Naive thymus-derived CD4-positive, alpha-beta T cell (primary cell): ENCODE measurements at regions of chr2 and their contacts with region 1.

Region 1: GRCh38 chr2:101697124-101698013 is at the start of gene MAP4K4:
- DNase-seq: peak; percentile 56 to 81 (median 70)
- ATAC-seq: peak; percentile 76
- H3K4me3 ChIP-seq: peak within 1 kb of the TSS; percentile 89
- H3K4me3 Mint-ChIP-seq: peak within 1 kb of the TSS in 6 of 10 donors; percentile 82 to 98 (median 96)
- H3K27ac ChIP-seq: peak within 1 kb of the TSS; percentile 79
- H3K27ac Mint-ChIP-seq: peak within 1 kb of the TSS; percentile 88 to 98 (median 93)
- H3K4me1 ChIP-seq: peaks cover 19 to 21% of the 10 kb centered on the region in 2 donors
- H3K4me1 Mint-ChIP-seq: peaks cover 11 to 41% (median 26%) of the 10 kb centered on the region in 7 donors
- H3K27me3 ChIP-seq: no peaks in the 10 kb centered on the region
- H3K27me3 Mint-ChIP-seq: no peaks in the 10 kb centered on the region
- total RNA-seq, gene MAP4K4: 104 to 138 (median 128) TPM

Region 2: GRCh38 chr2:101308432-101309210 is 388.7 kb before region 1 on chr2 and contains the start of gene RNF149:
- CTCF ChIA-PET with region 1: no interaction called
- POLR2A ChIA-PET with region 1: interaction called, 3 read pairs
- intact Hi-C with region 1: loop called (anchors 5 kb)
- DNase-seq: peak; percentile 80 to 98 (median 86)
- ATAC-seq: peak; percentile 84
- H3K4me3 ChIP-seq: peak within 1 kb of the TSS; percentile 84
- H3K4me3 Mint-ChIP-seq: peak within 1 kb of the TSS; percentile 91 to 100 (median 98)
- H3K27ac ChIP-seq: peak within 1 kb of the TSS; percentile 88
- H3K27ac Mint-ChIP-seq: peak within 1 kb of the TSS; percentile 91 to 99 (median 98)
- H3K4me1 ChIP-seq: peaks cover 60 to 63% of the 10 kb centered on the region in 2 donors
- H3K4me1 Mint-ChIP-seq: peaks cover 56 to 83% (median 74%) of the 10 kb centered on the region in 7 donors
- H3K27me3 ChIP-seq: no peaks in the 10 kb centered on the region
- H3K27me3 Mint-ChIP-seq: peaks cover 0 to 4% (median 0%) of the 10 kb centered on the region in 5 donors
- total RNA-seq, gene RNF149: 88.9 to 159 (median 114) TPM

Region 3: DNA sequence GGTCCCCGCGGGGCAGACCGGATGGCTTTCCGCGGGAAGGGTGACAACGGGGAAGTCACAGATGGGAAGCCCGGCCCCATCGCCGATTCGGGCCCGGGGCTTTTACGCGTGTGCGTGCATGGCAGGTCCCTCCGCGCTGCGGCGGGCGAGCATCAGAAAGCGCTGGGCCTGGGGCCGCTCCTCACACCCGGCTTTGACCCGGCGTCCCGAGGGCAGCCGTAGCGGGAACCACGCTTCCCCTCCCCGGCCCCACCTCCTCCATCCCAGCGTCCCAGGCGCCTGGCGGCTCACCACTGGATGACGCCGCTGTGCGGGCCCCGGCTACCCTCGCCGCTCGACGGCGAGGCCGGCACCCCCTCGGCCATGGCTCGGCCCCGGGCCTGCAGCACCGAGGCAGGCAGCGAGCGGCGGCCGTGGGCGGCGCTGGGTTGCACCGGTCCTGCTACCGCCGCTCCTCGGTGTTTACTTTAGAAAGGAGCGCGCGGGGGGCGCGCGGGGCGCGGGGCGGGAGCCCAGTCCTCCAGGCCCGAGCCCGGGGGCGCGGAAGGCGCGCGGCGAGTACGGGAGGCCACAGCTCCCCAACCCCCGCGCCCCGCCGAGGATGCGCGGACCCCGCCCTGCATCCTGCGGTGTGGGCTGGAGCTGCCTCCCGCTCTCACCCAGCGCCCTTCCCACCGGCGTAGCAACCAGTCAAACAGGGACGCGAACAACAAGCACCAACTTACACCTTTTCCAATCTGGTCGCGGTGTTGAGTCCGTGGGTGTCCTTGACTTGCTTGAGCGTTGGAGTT is 223.3 kb before region 1 on chr2:
- CTCF ChIA-PET with region 1: no interaction called
- POLR2A ChIA-PET with region 1: interaction called, 5 read pairs
- intact Hi-C with region 1: loop called (anchors 2 kb)
- DNase-seq: peak; percentile 7 to 70 (median 20)
- ATAC-seq: peak; percentile 46
- H3K4me3 ChIP-seq: peak overlapping the region; percentile 48
- H3K4me3 Mint-ChIP-seq: peak overlapping the region; percentile 81 to 90 (median 85)
- H3K27ac ChIP-seq: no peak overlapping the region
- H3K27ac Mint-ChIP-seq: peak overlapping the region in 5 of 9 donors; percentile 36 to 92 (median 73)
- H3K4me1 ChIP-seq: peaks cover 0 to 6% of the 10 kb centered on the region in 2 donors
- H3K4me1 Mint-ChIP-seq: peaks cover 6 to 50% (median 11%) of the 10 kb centered on the region in 7 donors
- H3K27me3 ChIP-seq: no peaks in the 10 kb centered on the region
- H3K27me3 Mint-ChIP-seq: peaks cover 0 to 7% (median 0%) of the 10 kb centered on the region in 5 donors

Region 4: GRCh38 chr2:101608408-101609317 is 88.7 kb before region 1 on chr2:
- CTCF ChIA-PET with region 1: no interaction called
- POLR2A ChIA-PET with region 1: no interaction called
- intact Hi-C with region 1: no loop called
- DNase-seq: no peak
- ATAC-seq: no peak
- H3K4me3 ChIP-seq: no peak overlapping the region
- H3K4me3 Mint-ChIP-seq: no peak overlapping the region
- H3K27ac ChIP-seq: no peak overlapping the region
- H3K27ac Mint-ChIP-seq: peak overlapping the region in 1 of 9 donors; percentile 76
- H3K4me1 ChIP-seq: no peaks in the 10 kb centered on the region
- H3K4me1 Mint-ChIP-seq: peaks cover 0 to 20% (median 2%) of the 10 kb centered on the region in 7 donors
- H3K27me3 ChIP-seq: no peaks in the 10 kb centered on the region
- H3K27me3 Mint-ChIP-seq: peaks cover 0 to 14% (median 0%) of the 10 kb centered on the region in 5 donors

Region 5: DNA sequence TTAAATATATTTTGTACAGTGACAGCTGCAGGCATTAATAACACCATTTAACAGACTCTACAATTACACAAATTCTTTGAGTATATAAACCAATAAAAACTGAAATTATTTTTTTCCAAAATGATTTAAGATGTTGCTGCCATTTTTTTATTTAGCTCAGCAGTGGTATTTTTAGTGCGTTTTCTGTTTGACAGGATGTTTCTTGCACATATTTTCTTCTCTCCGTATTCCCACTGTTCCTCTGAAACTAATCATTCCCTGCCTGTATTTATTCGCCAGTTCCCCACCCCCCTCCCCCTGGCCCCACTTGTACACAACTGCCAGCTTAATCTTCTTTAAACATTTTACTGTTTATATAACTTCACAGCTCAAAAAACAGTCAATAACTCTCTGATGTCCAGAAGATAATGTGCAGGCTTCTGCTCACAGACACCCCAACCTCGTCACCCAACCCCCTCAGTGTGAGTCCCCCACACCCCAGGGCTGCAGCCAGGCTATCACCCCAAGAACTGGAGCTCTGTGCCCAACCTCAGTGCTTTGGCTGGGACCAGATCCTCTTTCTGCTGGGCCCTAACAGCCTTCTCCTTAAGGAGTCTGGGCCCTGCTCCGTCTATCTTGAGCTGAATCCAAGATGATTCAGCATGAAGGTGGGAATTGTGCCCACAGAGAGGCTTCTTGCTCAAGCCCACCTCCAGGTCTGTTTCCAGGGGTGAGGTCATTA is 41.5 kb before region 1 on chr2:
- CTCF ChIA-PET with region 1: no interaction called
- POLR2A ChIA-PET with region 1: interaction called, 3 read pairs
- intact Hi-C with region 1: loop called (anchors 2 kb)
- DNase-seq: no peak
- ATAC-seq: no peak
- H3K4me3 ChIP-seq: no peak overlapping the region
- H3K4me3 Mint-ChIP-seq: no peak overlapping the region
- H3K27ac ChIP-seq: no peak overlapping the region
- H3K27ac Mint-ChIP-seq: no peak overlapping the region
- H3K4me1 ChIP-seq: peaks cover 5 to 10% of the 10 kb centered on the region in 2 donors
- H3K4me1 Mint-ChIP-seq: peaks cover 11 to 25% (median 16%) of the 10 kb centered on the region in 7 donors
- H3K27me3 ChIP-seq: no peaks in the 10 kb centered on the region
- H3K27me3 Mint-ChIP-seq: no peaks in the 10 kb centered on the region

Region 6: GRCh38 chr2:101667823-101668222 is 29.5 kb before region 1 on chr2:
- CTCF ChIA-PET with region 1: no interaction called
- POLR2A ChIA-PET with region 1: no interaction called
- intact Hi-C with region 1: no loop called
- DNase-seq: no peak
- ATAC-seq: no peak
- H3K4me3 ChIP-seq: no peak overlapping the region
- H3K4me3 Mint-ChIP-seq: no peak overlapping the region
- H3K27ac ChIP-seq: no peak overlapping the region
- H3K27ac Mint-ChIP-seq: peak overlapping the region in 1 of 9 donors; percentile 74
- H3K4me1 ChIP-seq: no peaks in the 10 kb centered on the region
- H3K4me1 Mint-ChIP-seq: peaks cover 0 to 8% (median 0%) of the 10 kb centered on the region in 7 donors
- H3K27me3 ChIP-seq: no peaks in the 10 kb centered on the region
- H3K27me3 Mint-ChIP-seq: no peaks in the 10 kb centered on the region

Region 7: DNA sequence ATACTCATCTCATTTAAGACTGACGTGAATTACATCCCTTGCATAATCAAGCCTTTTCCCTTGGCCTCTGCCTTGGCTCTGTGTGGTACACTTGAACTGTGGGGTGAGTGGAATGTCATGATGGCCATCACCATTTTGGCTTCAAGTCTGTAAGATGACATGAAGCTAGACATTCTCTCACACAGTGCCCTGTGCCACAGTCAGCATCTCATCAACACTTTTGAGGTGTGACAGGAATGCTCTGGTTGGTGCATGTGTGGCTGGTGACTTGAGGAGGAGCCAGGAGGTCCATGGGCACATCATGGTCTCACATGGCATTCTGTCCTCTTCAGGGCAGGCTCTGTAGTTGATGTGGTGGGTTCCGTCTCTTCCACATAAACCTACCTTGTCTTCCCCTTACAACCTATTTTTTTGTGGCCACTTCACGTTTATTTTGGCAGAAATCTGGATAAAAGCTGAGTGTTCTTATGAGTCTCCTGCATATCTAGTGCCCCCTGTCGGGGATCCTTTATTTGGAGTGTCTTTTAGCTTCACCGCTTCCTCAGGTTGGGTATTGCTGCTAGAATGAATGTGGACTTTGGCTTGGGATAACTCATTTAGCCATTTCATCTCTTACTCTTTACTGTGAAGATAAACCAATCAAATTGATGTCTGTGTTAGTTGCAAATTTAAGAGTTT is 28.3 kb after region 1 on chr2:
- CTCF ChIA-PET with region 1: interaction called, 8 read pairs
- POLR2A ChIA-PET with region 1: interaction called, 47 read pairs
- intact Hi-C with region 1: loop called (anchors 5 kb)
- DNase-seq: peak in 4 of 9 donors; percentile 31 to 43 (median 38)
- ATAC-seq: no peak
- H3K4me3 ChIP-seq: no peak overlapping the region
- H3K4me3 Mint-ChIP-seq: peak overlapping the region in 7 of 10 donors; percentile 2 to 55 (median 38)
- H3K27ac ChIP-seq: no peak overlapping the region
- H3K27ac Mint-ChIP-seq: peak overlapping the region in 5 of 9 donors; percentile 34 to 78 (median 38)
- H3K4me1 ChIP-seq: peaks cover 26 to 84% of the 10 kb centered on the region in 2 donors
- H3K4me1 Mint-ChIP-seq: peaks cover 66 to 99% (median 96%) of the 10 kb centered on the region in 7 donors
- H3K27me3 ChIP-seq: no peaks in the 10 kb centered on the region
- H3K27me3 Mint-ChIP-seq: no peaks in the 10 kb centered on the region

Region 8: GRCh38 chr2:101823347-101823791 is 126.0 kb after region 1 on chr2:
- CTCF ChIA-PET with region 1: interaction called, 10 read pairs
- POLR2A ChIA-PET with region 1: interaction called, 25 read pairs
- intact Hi-C with region 1: loop called (anchors 1 to 2 kb)
- DNase-seq: peak; percentile 29 to 72 (median 64)
- ATAC-seq: peak; percentile 93
- H3K4me3 ChIP-seq: no peak overlapping the region
- H3K4me3 Mint-ChIP-seq: peak overlapping the region; percentile 27 to 74 (median 56)
- H3K27ac ChIP-seq: peak overlapping the region; percentile 43
- H3K27ac Mint-ChIP-seq: peak overlapping the region; percentile 70 to 95 (median 82)
- H3K4me1 ChIP-seq: peaks cover 15 to 45% of the 10 kb centered on the region in 2 donors
- H3K4me1 Mint-ChIP-seq: peaks cover 47 to 97% (median 82%) of the 10 kb centered on the region in 7 donors
- H3K27me3 ChIP-seq: no peaks in the 10 kb centered on the region
- H3K27me3 Mint-ChIP-seq: no peaks in the 10 kb centered on the region

Region 9: GRCh38 chr2:101991721-101992145 is 294.4 kb after region 1 on chr2 and contains the start of gene IL1R2:
- CTCF ChIA-PET with region 1: no interaction called
- POLR2A ChIA-PET with region 1: no interaction called
- intact Hi-C with region 1: no loop called
- DNase-seq: no peak
- ATAC-seq: peak; percentile 79
- H3K4me3 ChIP-seq: no peak within 1 kb of the TSS
- H3K4me3 Mint-ChIP-seq: no peak within 1 kb of the TSS
- H3K27ac ChIP-seq: no peak within 1 kb of the TSS
- H3K27ac Mint-ChIP-seq: peak within 1 kb of the TSS in 3 of 9 donors; percentile 26 to 65 (median 36)
- H3K4me1 ChIP-seq: peaks cover 0 to 11% of the 10 kb centered on the region in 2 donors
- H3K4me1 Mint-ChIP-seq: peaks cover 12 to 27% (median 16%) of the 10 kb centered on the region in 7 donors
- H3K27me3 ChIP-seq: no peaks in the 10 kb centered on the region
- H3K27me3 Mint-ChIP-seq: peaks cover 16 to 41% (median 22%) of the 10 kb centered on the region in 5 donors
- total RNA-seq, gene IL1R2: 0.40 to 2.7 (median 1.3) TPM in 3 of 5 experiments, not detected in the others

Region 10: GRCh38 chr2:102082571-102083392 is 385.4 kb after region 1 on chr2:
- CTCF ChIA-PET with region 1: no interaction called
- POLR2A ChIA-PET with region 1: no interaction called
- intact Hi-C with region 1: no loop called
- DNase-seq: peak in 8 of 9 donors; percentile 36 to 75 (median 64)
- ATAC-seq: peak; percentile 83
- H3K4me3 ChIP-seq: peak overlapping the region; percentile 24
- H3K4me3 Mint-ChIP-seq: peak overlapping the region; percentile 67 to 88 (median 80)
- H3K27ac ChIP-seq: peak overlapping the region; percentile 61
- H3K27ac Mint-ChIP-seq: peak overlapping the region; percentile 84 to 95 (median 91)
- H3K4me1 ChIP-seq: peaks cover 10 to 20% of the 10 kb centered on the region in 2 donors
- H3K4me1 Mint-ChIP-seq: peaks cover 19 to 49% (median 42%) of the 10 kb centered on the region in 7 donors
- H3K27me3 ChIP-seq: no peaks in the 10 kb centered on the region
- H3K27me3 Mint-ChIP-seq: peaks cover 0 to 20% (median 0%) of the 10 kb centered on the region in 5 donors